Colonic mucosa (tissue), 4 donors: ENCODE measurements at regions of chr19 and their contacts with region 1.

Region 1: DNA sequence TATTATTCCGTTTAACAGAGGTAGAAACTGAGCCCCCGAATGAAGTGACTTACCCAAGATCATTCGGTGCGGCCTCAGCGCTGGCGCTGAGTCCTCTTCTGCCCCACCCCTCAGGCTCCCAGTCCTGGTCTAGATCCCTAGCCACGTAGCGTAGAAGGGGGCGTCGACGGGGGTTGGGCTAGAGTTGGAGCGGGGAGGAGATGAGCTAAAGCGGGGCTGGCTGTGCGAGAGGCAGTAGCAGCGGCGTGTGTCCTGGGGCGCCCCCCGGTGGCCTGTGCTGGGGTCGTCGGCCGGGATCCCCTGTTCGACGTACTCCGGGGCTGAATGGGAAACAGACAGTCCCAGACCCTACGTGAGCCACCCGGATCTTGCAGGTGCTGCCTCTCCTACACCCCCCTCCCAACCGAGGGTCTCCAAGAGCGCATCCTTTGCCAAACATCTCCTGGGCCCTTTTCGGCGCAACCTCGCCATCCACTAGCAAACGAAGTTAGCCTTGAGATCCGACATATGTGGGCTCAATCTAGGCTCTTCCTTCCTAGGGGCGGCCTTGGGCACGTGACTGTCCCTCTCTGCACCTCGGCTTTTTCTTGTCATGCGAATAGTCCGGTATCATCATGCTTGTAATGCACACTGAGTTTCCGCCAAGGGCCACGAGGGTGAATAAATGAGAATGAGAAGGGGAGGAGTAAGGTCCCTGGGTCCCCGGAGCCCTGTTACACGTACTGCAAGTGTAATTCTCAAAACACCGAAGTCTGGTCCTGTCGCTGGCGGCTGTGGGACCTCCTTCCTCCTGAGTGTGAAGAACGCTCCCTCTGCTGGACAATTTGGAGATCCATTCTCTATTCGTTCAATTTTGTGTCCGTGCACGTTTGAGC is 47.7 kb downstream of the CYP4F22 start:
- DNase-seq: peak; percentile 90
- H3K4me3 ChIP-seq: peak overlapping the region; percentile 26
- H3K27ac ChIP-seq: no peak overlapping the region
- H3K4me1 ChIP-seq: peaks cover 6% of the 10 kb centered on the region
- H3K27me3 ChIP-seq: no peaks in the 10 kb centered on the region
- CTCF ChIP-seq: peak; percentile 60

Region 2: DNA sequence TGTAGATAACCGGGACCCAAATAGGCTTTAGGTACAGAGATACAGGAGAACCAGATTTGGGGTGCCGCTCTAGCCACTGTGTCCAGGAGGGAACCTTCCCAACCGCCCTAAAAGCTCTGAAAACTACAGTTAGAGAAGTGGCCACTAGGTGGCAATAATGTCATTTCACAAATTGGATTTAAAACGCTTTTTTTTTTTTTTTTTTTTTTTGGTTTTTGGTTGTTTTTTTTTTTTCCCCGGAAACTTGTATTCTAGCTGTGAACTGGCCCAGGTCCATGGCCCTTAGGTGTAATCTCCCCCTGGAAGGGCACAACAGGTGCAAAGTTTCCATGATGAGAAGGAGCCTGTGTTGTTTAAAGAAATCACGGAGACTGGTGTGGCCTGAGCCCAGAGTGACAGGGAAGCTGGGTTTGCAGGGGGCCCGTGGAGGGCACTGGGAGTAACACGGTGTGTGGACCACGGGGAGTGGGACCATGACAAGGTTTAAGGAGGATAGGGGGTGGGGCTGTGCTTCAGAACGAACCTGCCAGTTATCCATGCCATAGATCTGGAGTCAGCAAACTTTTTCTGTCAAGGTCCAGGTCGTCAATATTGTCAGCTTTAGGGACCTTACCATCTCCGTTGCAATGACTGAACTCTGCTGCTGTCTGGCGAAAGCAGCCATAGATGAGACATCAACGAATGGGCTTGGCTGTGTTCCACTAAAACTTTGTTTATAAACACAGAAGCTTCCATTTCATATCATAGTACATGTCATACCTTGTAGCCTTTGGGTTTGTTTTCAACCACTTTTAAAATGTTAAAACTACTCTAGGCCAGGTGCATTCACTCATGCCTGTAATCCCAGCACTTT is 463.9 kb before region 1 on chr19:
- intact Hi-C with region 1: loop called (anchors 5 kb)
- DNase-seq: peak; percentile 48
- H3K4me3 ChIP-seq: no peak overlapping the region
- H3K27ac ChIP-seq: no peak overlapping the region
- H3K4me1 ChIP-seq: peaks cover 3% of the 10 kb centered on the region
- H3K27me3 ChIP-seq: no peaks in the 10 kb centered on the region
- CTCF ChIP-seq: peak; percentile 65

Region 3: DNA sequence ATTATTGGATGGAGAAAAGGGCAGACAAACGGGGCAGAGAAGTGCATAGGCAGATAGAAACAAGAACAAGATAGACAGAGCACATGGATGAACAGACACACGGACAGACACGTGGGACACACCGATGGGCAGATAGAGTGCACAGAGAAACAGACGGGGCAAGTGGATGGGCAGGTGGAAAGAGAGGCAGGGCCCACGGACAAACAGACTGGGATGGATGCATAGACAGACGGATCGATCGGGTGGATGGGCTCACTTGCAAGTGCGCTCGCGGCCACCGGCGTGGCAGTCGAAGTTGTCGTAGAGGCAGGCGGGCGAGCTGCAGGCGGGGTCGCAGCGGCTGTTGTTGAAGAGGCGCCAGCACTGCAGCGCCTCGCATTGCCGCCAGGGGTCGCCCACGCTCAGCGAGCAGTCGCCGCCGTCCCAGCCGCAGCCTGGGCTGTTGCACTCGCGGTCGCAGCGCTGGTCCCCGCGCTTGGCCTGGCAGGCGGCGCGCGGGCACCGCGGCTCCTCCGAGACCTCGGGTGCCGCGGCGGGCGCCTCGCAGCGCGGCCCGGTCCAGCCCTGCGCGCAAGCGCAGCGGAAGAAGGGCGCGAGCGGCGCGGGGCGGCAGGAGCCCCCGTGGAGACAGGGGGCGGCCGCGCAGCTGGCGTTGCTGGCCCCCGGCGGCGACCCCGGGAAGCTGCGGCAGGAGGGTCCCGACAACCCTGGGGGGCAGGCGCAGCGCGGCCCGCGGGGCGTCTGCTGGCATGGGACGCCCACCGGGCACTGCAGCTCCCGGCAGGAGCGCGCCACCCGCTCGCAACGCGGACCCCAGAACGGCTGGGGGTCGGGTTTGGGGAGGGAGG is 378.5 kb before region 1 on chr19:
- intact Hi-C with region 1: loop called (anchors 5 kb)
- DNase-seq: peak; percentile 75
- H3K4me3 ChIP-seq: no peak overlapping the region
- H3K27ac ChIP-seq: no peak overlapping the region
- H3K4me1 ChIP-seq: no peaks in the 10 kb centered on the region
- H3K27me3 ChIP-seq: peaks cover 3% of the 10 kb centered on the region
- CTCF ChIP-seq: peak; percentile 94

Region 4: GRCh38 chr19:15264061-15264932 is 291.7 kb before region 1 on chr19:
- intact Hi-C with region 1: loop called (anchors 10 kb)
- DNase-seq: peak; percentile 77
- H3K4me3 ChIP-seq: no peak overlapping the region
- H3K27ac ChIP-seq: peak overlapping the region; percentile 24
- H3K4me1 ChIP-seq: no peaks in the 10 kb centered on the region
- H3K27me3 ChIP-seq: no peaks in the 10 kb centered on the region
- CTCF ChIP-seq: peak; percentile 69

Region 5: DNA sequence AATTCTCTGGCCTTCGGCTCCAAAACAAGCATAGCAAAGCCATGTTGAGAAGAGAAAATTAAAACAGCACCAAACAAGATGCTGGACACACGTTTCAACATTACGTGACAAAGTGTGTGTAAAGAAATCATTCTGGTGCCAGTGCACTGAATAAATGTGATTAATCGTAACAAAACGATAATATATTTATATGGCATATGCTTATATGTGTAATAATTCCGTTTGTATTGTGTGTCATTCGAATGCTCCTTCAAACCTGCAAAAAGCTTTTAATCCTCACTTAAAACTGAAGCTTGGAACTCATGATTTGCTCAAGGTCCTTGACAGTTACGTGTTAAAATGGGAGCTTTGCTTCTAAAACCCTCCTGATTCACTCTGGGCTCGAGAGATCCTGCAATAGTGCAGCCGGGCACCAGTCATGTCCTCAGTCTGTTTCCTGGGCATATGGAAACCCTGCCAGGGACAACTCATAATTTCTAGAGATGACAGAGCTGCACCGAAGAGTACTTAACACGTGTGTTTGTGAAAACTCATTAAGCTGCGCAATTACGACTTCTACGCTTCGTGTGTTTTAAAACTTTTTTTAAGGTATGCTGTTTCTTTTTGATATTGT is 136.5 kb before region 1 on chr19:
- intact Hi-C with region 1: loop called (anchors 10 kb)
- DNase-seq: no peak
- H3K4me3 ChIP-seq: peak overlapping the region; percentile 100
- H3K27ac ChIP-seq: no peak overlapping the region
- H3K4me1 ChIP-seq: peaks cover 18% of the 10 kb centered on the region
- H3K27me3 ChIP-seq: no peaks in the 10 kb centered on the region
- CTCF ChIP-seq: no peak